Mammary epithelial cell (primary cell): ENCODE measurements at regions of chr14 and their contacts with region 1.

Region 1: GRCh38 chr14:79044894-79045624 is 874.9 kb downstream of the NRXN3 start:
- DNase-seq: peak; percentile 98
- H3K4me3 ChIP-seq: no peak overlapping the region
- H3K27ac ChIP-seq: peak overlapping the region; percentile 70
- H3K4me1 ChIP-seq: peaks cover 17% of the 10 kb centered on the region
- H3K27me3 ChIP-seq: no peaks in the 10 kb centered on the region
- CTCF ChIP-seq: no peak

Region 2: DNA sequence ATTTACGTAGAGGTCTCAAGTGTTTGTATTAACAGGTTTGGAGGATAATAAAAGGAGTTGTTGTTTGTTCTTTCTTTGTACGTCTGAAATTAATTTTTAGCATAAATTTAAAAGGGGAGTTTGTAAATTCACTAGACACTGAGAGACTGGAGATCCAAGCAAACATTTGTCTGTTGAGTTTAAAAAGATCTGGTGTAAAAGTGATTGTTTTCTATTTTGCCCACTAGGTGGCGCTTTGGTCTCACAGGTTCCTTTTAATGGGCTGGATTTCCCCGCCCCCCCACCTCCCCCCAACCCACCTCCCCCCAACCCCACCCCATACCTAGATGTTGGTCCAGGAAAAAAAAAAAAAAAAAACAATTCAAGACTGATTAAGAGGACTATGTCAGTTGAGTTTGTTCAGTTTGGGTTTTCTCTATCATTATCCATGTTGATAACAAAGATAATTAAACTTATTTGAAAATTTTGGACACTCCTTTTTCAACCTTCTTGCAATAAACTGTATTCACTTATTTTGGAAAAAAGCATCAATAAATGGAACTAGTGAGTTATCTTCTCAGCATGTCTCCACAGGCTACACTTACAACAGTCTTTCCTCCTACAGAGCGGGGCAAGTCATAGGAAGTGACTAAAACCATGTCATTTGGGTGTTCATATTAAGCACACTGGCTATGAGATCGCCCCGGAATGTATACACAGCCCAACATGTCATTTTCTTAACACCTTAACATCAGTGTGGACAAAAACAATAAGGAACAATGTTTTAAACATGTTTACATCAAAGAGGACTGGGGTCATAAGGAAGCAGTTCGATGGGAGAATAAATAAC is 33.8 kb before region 1 on chr14:
- CTCF ChIA-PET with region 1: no interaction called
- dilution Hi-C with region 1: no loop called
- in situ Hi-C with region 1: no loop called
- intact Hi-C with region 1: loop called (anchors 2 kb)
- DNase-seq: peak; percentile 89
- H3K4me3 ChIP-seq: no peak overlapping the region
- H3K27ac ChIP-seq: peak overlapping the region; percentile 78
- H3K4me1 ChIP-seq: peaks cover 12% of the 10 kb centered on the region
- H3K27me3 ChIP-seq: no peaks in the 10 kb centered on the region
- CTCF ChIP-seq: peak; percentile 22 to 48

Region 3: DNA sequence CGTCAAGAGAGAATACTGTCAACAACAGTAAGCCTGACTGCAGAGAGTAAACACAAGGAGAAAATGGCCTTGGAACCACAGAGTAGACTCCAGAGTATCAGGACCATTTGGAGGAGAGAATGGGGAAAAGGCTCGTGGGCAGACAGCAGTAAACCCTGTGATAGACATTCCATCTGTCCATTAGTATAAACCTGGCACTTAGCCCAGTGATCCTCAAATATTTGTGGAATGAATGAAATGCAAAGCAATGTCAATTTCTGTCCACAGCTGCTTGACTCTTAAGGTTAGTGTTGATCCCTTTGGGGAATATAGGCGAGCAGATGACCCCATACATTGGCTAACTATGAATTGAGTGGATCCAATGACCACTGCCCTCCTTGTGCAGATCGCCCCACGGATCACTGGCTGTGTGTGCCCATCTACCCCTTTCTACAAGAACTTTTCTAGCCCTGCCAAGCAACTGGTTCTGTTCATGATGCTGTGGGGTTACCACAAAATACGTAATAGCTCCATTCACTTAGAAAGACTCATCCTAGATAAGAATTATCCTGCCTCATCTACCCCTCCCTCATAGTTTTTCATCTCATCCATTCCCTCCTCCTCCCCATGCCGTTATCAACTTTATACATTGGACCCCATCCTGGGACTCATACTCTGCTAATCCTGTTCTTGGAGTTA is 28.1 kb before region 1 on chr14:
- CTCF ChIA-PET with region 1: no interaction called
- dilution Hi-C with region 1: no loop called
- in situ Hi-C with region 1: no loop called
- intact Hi-C with region 1: loop called (anchors 1 kb)
- DNase-seq: peak; percentile 48
- H3K4me3 ChIP-seq: no peak overlapping the region
- H3K27ac ChIP-seq: no peak overlapping the region
- H3K4me1 ChIP-seq: peaks cover 22% of the 10 kb centered on the region
- H3K27me3 ChIP-seq: no peaks in the 10 kb centered on the region
- CTCF ChIP-seq: no peak

Region 4: GRCh38 chr14:79056879-79057278 is 11.8 kb after region 1 on chr14:
- CTCF ChIA-PET with region 1: no interaction called
- dilution Hi-C with region 1: no loop called
- in situ Hi-C with region 1: no loop called
- intact Hi-C with region 1: no loop called
- DNase-seq: peak; percentile 16
- H3K4me3 ChIP-seq: no peak overlapping the region
- H3K27ac ChIP-seq: no peak overlapping the region
- H3K4me1 ChIP-seq: no peaks in the 10 kb centered on the region
- H3K27me3 ChIP-seq: no peaks in the 10 kb centered on the region
- CTCF ChIP-seq: no peak

Region 5: GRCh38 chr14:79278798-79279644 is 234.0 kb after region 1 on chr14:
- CTCF ChIA-PET with region 1: no interaction called
- dilution Hi-C with region 1: no loop called
- in situ Hi-C with region 1: no loop called
- intact Hi-C with region 1: loop called (anchors 1 kb)
- DNase-seq: peak; percentile 90
- H3K4me3 ChIP-seq: peak overlapping the region; percentile 44 to 61 (median 57)
- H3K27ac ChIP-seq: no peak overlapping the region
- H3K4me1 ChIP-seq: peaks cover 16% of the 10 kb centered on the region
- H3K27me3 ChIP-seq: peaks cover 8% of the 10 kb centered on the region
- CTCF ChIP-seq: no peak